ENCODE measurements at regions of chr12 and their contacts with region 1.

Region 1: GRCh38 chr12:6890789-6891645 is 13.6 kb upstream of the LRRC23 start:
- DNase-seq: peak; percentile 98
- H3K4me3 ChIP-seq: peak overlapping the region; percentile 44 to 63
- H3K27ac ChIP-seq: peak overlapping the region; percentile 89 to 96
- H3K4me1 ChIP-seq: peaks cover 6 to 9% of the 10 kb centered on the region in 2 experiments; a peak in 3 of 4 replicates
- H3K27me3 ChIP-seq: no peaks in the 10 kb centered on the region
- CTCF ChIP-seq: peak; percentile 79
- EP300 ChIP-seq: 0 out of 4 replicates have a peak, but pooled peaks of 1 of the 2 experiments have one; percentile 16
- RAD21 ChIP-seq: peak; percentile 58

Region 2: DNA sequence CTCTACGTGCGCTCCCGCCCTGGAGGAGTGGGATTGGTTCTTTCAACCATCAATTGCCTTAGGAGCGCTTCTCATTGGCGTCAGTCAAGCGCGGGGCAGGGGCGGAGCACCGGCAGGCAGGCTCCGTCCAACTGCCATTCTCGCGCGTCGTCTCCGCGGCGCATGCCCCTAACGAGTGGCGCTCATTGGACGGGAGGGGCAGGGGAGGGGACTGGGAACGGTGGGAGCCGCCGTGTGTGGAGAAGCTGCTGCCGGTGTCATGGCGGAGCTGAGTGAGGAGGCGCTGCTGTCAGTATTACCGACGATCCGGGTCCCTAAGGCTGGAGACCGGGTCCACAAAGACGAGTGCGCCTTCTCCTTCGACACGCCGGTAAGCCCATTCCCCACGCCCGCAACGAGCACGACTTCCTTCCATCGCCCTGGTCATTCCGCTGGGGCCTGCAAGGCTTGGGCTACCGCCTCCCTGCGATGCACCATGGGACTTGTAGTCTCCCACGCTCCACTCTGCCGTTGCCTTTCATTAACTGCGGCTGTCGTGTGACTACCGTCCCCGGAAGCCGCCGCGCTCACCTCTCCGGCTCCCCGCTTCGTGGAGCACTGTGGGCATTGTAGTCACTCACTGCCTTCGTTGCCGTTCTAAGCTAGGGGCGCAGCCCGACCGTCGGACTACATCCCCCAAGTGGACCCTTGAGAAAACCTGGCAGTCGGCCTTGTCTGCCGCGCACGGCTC is 38.9 kb before region 1 on chr12 and contains the start of gene USP5:
- CTCF ChIA-PET with region 1: interaction called, 11 read pairs
- POLR2A ChIA-PET with region 1: interaction called, 3 read pairs
- DNase-seq: peak; percentile 92
- H3K4me3 ChIP-seq: peak within 1 kb of the TSS; percentile 70 to 76
- H3K27ac ChIP-seq: peak within 1 kb of the TSS; percentile 73 to 97
- H3K4me1 ChIP-seq: peaks cover 7 to 17% of the 10 kb centered on the region in 2 experiments
- H3K27me3 ChIP-seq: no peaks in the 10 kb centered on the region
- CTCF ChIP-seq: 0 out of 2 replicates have a peak, but pooled peaks have one; percentile 7
- EP300 ChIP-seq: no peak
- RAD21 ChIP-seq: no peak
- polyA plus RNA-seq, gene USP5: 97.2 and 100 TPM in 2 replicates

Region 3: GRCh38 chr12:6904280-6905278 is 13.6 kb after region 1 on chr12 and contains the start of gene LRRC23:
- CTCF ChIA-PET with region 1: interaction called, 19 read pairs
- POLR2A ChIA-PET with region 1: interaction called, 6 read pairs
- DNase-seq: peak; percentile 88
- H3K4me3 ChIP-seq: peak within 1 kb of the TSS; percentile 72 to 98
- H3K27ac ChIP-seq: peak within 1 kb of the TSS; percentile 71 to 78
- H3K4me1 ChIP-seq: peaks cover 9 to 10% of the 10 kb centered on the region in 2 experiments; a peak in 2 of 4 replicates
- H3K27me3 ChIP-seq: no peaks in the 10 kb centered on the region
- CTCF ChIP-seq: no peak
- EP300 ChIP-seq: no peak
- RAD21 ChIP-seq: no peak
- polyA plus RNA-seq, gene LRRC23: 11.9 TPM in 2 replicates

Region 4: DNA sequence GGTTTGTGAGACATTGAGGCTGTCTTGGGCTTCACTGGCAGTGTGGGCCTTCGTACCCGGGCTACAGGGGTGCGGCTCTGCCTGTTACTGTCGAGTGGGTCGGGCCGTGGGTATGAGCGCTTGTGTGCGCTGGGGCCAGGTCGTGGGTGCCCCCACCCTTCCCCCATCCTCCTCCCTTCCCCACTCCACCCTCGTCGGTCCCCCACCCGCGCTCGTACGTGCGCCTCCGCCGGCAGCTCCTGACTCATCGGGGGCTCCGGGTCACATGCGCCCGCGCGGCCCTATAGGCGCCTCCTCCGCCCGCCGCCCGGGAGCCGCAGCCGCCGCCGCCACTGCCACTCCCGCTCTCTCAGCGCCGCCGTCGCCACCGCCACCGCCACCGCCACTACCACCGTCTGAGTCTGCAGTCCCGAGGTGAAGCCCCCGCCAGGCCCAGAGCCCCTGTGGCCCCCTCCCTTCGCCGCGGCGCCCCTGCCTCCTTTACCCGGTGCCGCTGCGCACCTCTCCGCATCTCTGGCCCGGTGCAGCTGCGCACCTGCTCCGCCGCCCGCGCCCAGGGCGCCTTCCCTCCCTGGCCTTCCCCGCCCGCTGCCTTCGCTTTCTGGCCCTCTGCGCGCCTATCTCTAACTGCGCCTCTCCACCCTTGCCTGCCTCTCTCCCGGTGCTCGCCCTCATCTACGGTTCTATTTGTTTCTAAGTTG is 23.4 kb after region 1 on chr12 and contains the start of gene ENO2:
- CTCF ChIA-PET with region 1: interaction called, 20 read pairs
- POLR2A ChIA-PET with region 1: interaction called, 12 read pairs
- DNase-seq: peak; percentile 91
- H3K4me3 ChIP-seq: peak within 1 kb of the TSS; percentile 69 to 92
- H3K27ac ChIP-seq: peak within 1 kb of the TSS; percentile 49 to 82
- H3K4me1 ChIP-seq: peaks cover 14 to 18% of the 10 kb centered on the region in 2 experiments; a peak in 2 of 4 replicates
- H3K27me3 ChIP-seq: no peaks in the 10 kb centered on the region
- CTCF ChIP-seq: no peak
- EP300 ChIP-seq: no peak; a peak in 1 of 4 replicates
- RAD21 ChIP-seq: no peak
- polyA plus RNA-seq, gene ENO2: 50.6 and 56.9 TPM in 2 replicates